Sigmoid colon (tissue), 7 donors: ENCODE measurements at regions of chr3 and their contacts with region 1.

Region 1: GRCh38 chr3:132029182-132029902 is 5.5 kb downstream of the CPNE4 start:
- DNase-seq: peak; percentile 75
- H3K4me3 ChIP-seq: no peak overlapping the region
- H3K27ac ChIP-seq: no peak overlapping the region
- H3K4me1 ChIP-seq: peaks cover 0 to 6% (median 4%) of the 10 kb centered on the region in 4 donors
- H3K27me3 ChIP-seq: peaks cover 4 to 32% (median 13%) of the 10 kb centered on the region in 3 donors
- CTCF ChIP-seq: peak in 3 of 4 experiments; percentile 42 to 65 (median 56)
- EP300 ChIP-seq: no peak
- POLR2A ChIP-seq: no peak

Region 2: GRCh38 chr3:131794766-131795388 is 234.5 kb before region 1 on chr3:
- intact Hi-C with region 1: loop called (anchors 2 kb)
- DNase-seq: no peak
- H3K4me3 ChIP-seq: no peak overlapping the region
- H3K27ac ChIP-seq: no peak overlapping the region
- H3K4me1 ChIP-seq: no peaks in the 10 kb centered on the region
- H3K27me3 ChIP-seq: no peaks in the 10 kb centered on the region
- CTCF ChIP-seq: peak in 3 of 4 experiments; percentile 17 to 65 (median 56)
- EP300 ChIP-seq: no peak
- POLR2A ChIP-seq: no peak

Region 3: GRCh38 chr3:132135628-132136333 is 106.4 kb after region 1 on chr3:
- intact Hi-C with region 1: no loop called
- DNase-seq: no peak
- H3K4me3 ChIP-seq: no peak overlapping the region
- H3K27ac ChIP-seq: no peak overlapping the region
- H3K4me1 ChIP-seq: peaks cover 0 to 9% (median 0%) of the 10 kb centered on the region in 4 donors
- H3K27me3 ChIP-seq: no peaks in the 10 kb centered on the region
- CTCF ChIP-seq: no peak
- EP300 ChIP-seq: no peak
- POLR2A ChIP-seq: no peak